ENCODE measurements at regions of chr22 and their contacts with region 1.

Region 1: GRCh38 chr22:39496131-39496838 is 5.8 kb upstream of the MIEF1 start:
- DNase-seq: peak; percentile 80
- ATAC-seq: peak; percentile 78
- H3K4me3 Mint-ChIP-seq: no peak overlapping the region
- H3K27ac Mint-ChIP-seq: no peak overlapping the region
- H3K4me1 Mint-ChIP-seq: peaks cover 3% of the 10 kb centered on the region
- H3K27me3 Mint-ChIP-seq: no peaks in the 10 kb centered on the region
- CTCF ChIP-seq: peak; percentile 82

Region 2: GRCh38 chr22:39454385-39454871 is 41.9 kb before region 1 on chr22:
- CTCF ChIA-PET with region 1: interaction called, 11 read pairs
- POLR2A ChIA-PET with region 1: no interaction called
- intact Hi-C with region 1: no loop called
- DNase-seq: no peak
- ATAC-seq: no peak
- H3K4me3 Mint-ChIP-seq: no peak overlapping the region
- H3K27ac Mint-ChIP-seq: no peak overlapping the region
- H3K4me1 Mint-ChIP-seq: peaks cover 24% of the 10 kb centered on the region
- H3K27me3 Mint-ChIP-seq: peaks cover 15% of the 10 kb centered on the region
- CTCF ChIP-seq: no peak

Region 3: DNA sequence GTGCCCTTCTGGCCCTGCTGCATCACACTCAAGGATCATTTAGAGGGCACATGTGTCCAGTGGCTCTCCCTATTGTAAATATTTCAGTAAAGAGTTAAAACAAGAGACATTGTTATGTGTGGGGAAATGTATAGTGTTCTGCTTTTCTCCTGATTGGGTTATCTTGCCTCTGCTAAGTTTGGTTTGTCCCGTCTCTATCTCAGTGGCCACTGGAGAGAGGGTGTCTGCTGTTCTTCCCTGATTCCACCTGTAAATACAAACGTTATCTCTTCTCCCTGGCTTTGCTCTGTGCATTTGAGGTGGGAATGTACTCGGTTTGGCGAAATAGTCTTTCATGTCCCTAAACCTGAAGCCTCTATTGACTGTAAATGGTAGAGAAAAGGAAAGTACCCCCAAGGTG is 12.1 kb after region 1 on chr22:
- CTCF ChIA-PET with region 1: interaction called, 69 read pairs
- POLR2A ChIA-PET with region 1: interaction called, 4 read pairs
- intact Hi-C with region 1: no loop called
- DNase-seq: no peak
- ATAC-seq: no peak
- H3K4me3 Mint-ChIP-seq: no peak overlapping the region
- H3K27ac Mint-ChIP-seq: peak overlapping the region; percentile 68
- H3K4me1 Mint-ChIP-seq: peaks cover 42% of the 10 kb centered on the region
- H3K27me3 Mint-ChIP-seq: no peaks in the 10 kb centered on the region
- CTCF ChIP-seq: no peak

Region 4: GRCh38 chr22:39514373-39514973 is 18.2 kb after region 1 on chr22:
- CTCF ChIA-PET with region 1: interaction called, 69 read pairs
- POLR2A ChIA-PET with region 1: interaction called, 48 read pairs
- intact Hi-C with region 1: no loop called
- DNase-seq: peak; percentile 75
- ATAC-seq: no peak
- H3K4me3 Mint-ChIP-seq: no peak overlapping the region
- H3K27ac Mint-ChIP-seq: peak overlapping the region; percentile 19
- H3K4me1 Mint-ChIP-seq: peaks cover 39% of the 10 kb centered on the region
- H3K27me3 Mint-ChIP-seq: no peaks in the 10 kb centered on the region
- CTCF ChIP-seq: peak; percentile 72

Region 5: GRCh38 chr22:39520054-39520891 is 24.0 kb after region 1 on chr22 and contains the start of gene ATF4:
- CTCF ChIA-PET with region 1: interaction called, 323 read pairs
- POLR2A ChIA-PET with region 1: interaction called, 48 read pairs
- intact Hi-C with region 1: no loop called
- DNase-seq: peak; percentile 99
- ATAC-seq: peak; percentile 89
- H3K4me3 Mint-ChIP-seq: peak within 1 kb of the TSS; percentile 89
- H3K27ac Mint-ChIP-seq: peak within 1 kb of the TSS; percentile 98
- H3K4me1 Mint-ChIP-seq: peaks cover 57% of the 10 kb centered on the region
- H3K27me3 Mint-ChIP-seq: no peaks in the 10 kb centered on the region
- CTCF ChIP-seq: no peak
- total RNA-seq, gene ATF4: 518 to 536 TPM

Measured in activated CD8-positive, alpha-beta T cell treated with anti-CD3 and anti-CD28 coated beads for 36 hours (primary cell).